Pancreas (tissue), 10 donors: ENCODE measurements at regions of chr4 and their contacts with region 1.

Region 1: GRCh38 chr4:74675673-74676279 is 118.5 kb downstream of the BTC start:
- DNase-seq: peak in 2 of 6 donors; percentile 21 to 51
- ATAC-seq: peak; percentile 78 to 94 (median 90)
- H3K4me3 ChIP-seq: no peak overlapping the region
- H3K27ac ChIP-seq: no peak overlapping the region
- H3K4me1 ChIP-seq: peaks cover 0 to 4% (median 0%) of the 10 kb centered on the region in 3 donors
- H3K27me3 ChIP-seq: no peaks in the 10 kb centered on the region
- CTCF ChIP-seq: peak; percentile 47 to 64 (median 55)

Region 2: DNA sequence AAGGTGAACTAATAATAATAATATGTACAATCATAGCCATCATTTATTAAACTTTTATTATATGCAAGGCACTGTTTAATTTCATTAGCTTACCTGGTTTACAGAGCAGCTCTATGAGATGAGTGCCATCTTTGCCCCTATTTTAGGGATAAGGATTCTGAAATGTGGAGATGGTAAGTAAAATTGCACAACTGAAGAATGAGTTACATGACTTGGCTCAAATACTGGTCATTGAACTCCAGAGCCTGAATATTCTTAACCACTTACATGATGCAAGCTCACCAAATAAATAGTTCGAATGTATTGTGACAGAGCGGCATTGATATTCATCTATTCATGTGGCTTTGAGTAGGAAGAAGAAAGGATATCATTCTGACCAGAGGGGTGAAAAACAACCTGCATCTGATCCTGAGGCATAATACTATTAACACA is 1260.0 kb before region 1 on chr4:
- intact Hi-C with region 1: no loop called
- DNase-seq: no peak
- ATAC-seq: no peak
- H3K4me3 ChIP-seq: no peak overlapping the region
- H3K27ac ChIP-seq: no peak overlapping the region
- H3K4me1 ChIP-seq: no peaks in the 10 kb centered on the region
- H3K27me3 ChIP-seq: no peaks in the 10 kb centered on the region
- CTCF ChIP-seq: no peak

Region 3: DNA sequence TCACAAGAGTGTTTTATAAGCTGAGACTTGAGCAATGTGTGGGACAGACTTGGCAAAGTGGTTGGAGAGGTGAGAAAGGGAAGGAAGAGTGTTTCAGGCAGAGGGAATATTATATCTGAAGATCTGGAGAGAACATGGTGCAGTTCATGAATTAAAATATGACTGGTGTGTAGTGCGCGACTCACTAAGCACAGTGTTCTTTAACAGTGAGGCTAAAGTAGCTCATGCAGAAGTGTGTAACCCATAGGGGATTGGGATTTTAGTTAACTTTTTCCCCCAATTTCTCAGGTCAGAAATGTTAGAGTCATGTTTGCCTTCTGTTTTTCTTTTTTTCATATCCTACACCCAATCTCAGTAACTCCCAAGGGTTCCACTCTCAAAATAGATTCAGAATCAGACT is 508.2 kb before region 1 on chr4:
- intact Hi-C with region 1: no loop called
- DNase-seq: no peak
- ATAC-seq: no peak
- H3K4me3 ChIP-seq: no peak overlapping the region
- H3K27ac ChIP-seq: no peak overlapping the region
- H3K4me1 ChIP-seq: no peaks in the 10 kb centered on the region
- H3K27me3 ChIP-seq: no peaks in the 10 kb centered on the region
- CTCF ChIP-seq: no peak

Region 4: GRCh38 chr4:74370912-74371311 is 304.9 kb before region 1 on chr4:
- intact Hi-C with region 1: loop called in 2 of 3 experiments (anchors 5 to 10 kb)
- DNase-seq: peak in 2 of 6 donors; percentile 18 to 20
- ATAC-seq: peak in 3 of 4 donors; percentile 77 to 83 (median 80)
- H3K4me3 ChIP-seq: no peak overlapping the region
- H3K27ac ChIP-seq: no peak overlapping the region
- H3K4me1 ChIP-seq: peaks cover 0 to 2% (median 0%) of the 10 kb centered on the region in 3 donors
- H3K27me3 ChIP-seq: peaks cover 0 to 12% (median 0%) of the 10 kb centered on the region in 4 donors
- CTCF ChIP-seq: peak in 2 of 4 donors; percentile 17 to 29

Region 5: GRCh38 chr4:74751856-74752255 is 76.1 kb after region 1 on chr4:
- intact Hi-C with region 1: no loop called
- DNase-seq: no peak
- ATAC-seq: no peak
- H3K4me3 ChIP-seq: no peak overlapping the region
- H3K27ac ChIP-seq: no peak overlapping the region
- H3K4me1 ChIP-seq: no peaks in the 10 kb centered on the region
- H3K27me3 ChIP-seq: no peaks in the 10 kb centered on the region
- CTCF ChIP-seq: no peak